Left colon (tissue), 2 donors: ENCODE measurements at regions of chr16 and their contacts with region 1.

Region 1: DNA sequence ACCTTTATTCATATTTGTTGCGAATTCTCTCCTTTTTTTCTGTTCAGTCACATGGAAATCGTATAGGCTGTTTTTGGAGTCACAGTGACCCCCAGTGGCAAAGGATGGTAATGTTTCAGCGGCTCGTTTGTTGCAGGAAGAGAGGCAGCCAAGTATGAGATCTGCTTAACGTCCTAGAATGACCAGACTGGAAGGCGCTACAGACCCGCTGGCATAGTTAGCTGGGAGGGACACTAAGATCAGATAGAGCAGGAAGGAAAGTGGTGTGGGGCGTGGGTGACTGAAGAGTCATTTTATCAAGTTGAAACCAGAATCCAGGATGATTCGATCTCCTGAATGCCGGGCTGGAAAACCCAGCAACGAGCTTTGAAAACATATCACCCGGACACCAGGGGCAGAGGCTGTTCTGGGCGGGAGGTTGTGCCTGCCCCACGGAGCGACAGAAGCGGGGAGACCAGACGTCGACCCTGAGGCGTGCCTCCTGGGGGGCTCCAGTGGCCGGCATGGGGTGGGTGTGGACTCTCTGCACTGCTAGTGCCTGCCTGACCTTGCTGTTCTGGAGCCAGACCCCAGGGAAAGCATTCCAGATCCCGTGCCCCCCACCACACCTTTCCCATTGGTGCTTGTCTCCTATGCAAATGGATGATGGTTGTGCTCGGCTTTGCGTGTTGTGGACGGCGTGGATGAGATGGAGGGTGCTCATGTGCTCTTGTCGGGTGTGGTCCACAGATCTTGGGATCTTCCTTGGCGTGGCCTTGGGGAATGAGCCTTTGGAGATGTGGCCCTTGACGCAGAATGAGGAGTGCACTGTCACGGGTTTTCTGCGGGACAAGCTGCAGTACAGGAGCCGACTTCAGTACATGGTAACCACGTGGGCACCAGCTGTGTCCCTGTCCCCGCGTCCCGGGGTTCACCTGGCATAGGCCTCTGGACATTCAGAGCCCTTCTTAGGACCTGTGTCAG is 7.7 kb downstream of the IL34 start:
- DNase-seq: peak; percentile 61 to 78
- ATAC-seq: peak; percentile 88

Region 2: GRCh38 chr16:70364399-70364798 is 289.7 kb before region 1 on chr16:
- intact Hi-C with region 1: loop called in 1 of 2 experiments (anchors 10 kb)
- DNase-seq: no peak
- ATAC-seq: no peak

Region 3: GRCh38 chr16:70523076-70523742 is 130.9 kb before region 1 on chr16 and contains the start of gene COG4:
- intact Hi-C with region 1: loop called in 1 of 2 experiments (anchors 10 kb)
- DNase-seq: peak; percentile 86 to 92
- ATAC-seq: peak; percentile 85
- total RNA-seq, gene COG4: 49.5 to 54.4 TPM